PC-3 (cell line): ENCODE measurements at regions of chr3 and their contacts with region 1.

Region 1: GRCh38 chr3:153927107-153927506 is 194.1 kb upstream of the ARHGEF26 start:
- DNase-seq: peak; percentile 80
- ATAC-seq: peak; percentile 93
- H3K4me3 ChIP-seq: 0 out of 2 replicates have a peak overlapping the region, but pooled peaks have one; percentile 5
- H3K27ac ChIP-seq: no peak overlapping the region
- H3K4me1 ChIP-seq: peaks cover 6% of the 10 kb centered on the region
- H3K27me3 ChIP-seq: no peaks in the 10 kb centered on the region
- CTCF ChIP-seq: peak; percentile 65

Region 2: DNA sequence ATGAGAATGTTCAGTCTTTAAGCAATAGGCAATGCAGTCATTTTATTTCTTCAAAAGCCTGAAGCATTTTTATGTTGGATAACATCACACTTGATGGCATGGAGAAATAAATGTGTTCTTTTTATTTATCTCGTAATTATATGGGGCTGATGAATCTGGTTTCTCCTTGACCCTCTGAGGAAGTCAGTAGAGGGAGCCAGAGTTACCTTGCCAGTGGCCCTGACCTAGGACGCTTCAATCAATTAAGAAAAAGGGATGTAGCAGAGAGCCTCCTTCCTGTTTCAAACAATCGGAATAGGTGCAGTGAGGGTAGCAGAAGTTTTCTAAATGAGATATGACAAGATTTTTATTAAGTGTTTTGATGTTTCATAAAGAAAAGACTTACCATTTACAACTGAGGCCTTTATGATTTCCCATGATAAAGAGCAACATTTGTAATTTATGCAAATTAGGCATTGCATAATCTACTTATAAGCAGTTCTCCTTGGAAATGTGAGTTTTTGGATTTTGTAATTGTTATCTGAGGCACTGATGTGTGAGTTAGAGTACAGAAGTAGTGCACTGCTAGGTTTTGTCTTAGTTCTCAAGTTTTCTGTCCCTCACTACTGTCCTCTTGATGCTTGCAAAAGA is 635.9 kb before region 1 on chr3:
- CTCF ChIA-PET with region 1: no interaction called
- POLR2A ChIA-PET with region 1: no interaction called
- intact Hi-C with region 1: loop called (anchors 2 kb)
- DNase-seq: peak; percentile 69
- ATAC-seq: peak; percentile 80
- H3K4me3 ChIP-seq: no peak overlapping the region
- H3K27ac ChIP-seq: no peak overlapping the region
- H3K4me1 ChIP-seq: peaks cover 33% of the 10 kb centered on the region
- H3K27me3 ChIP-seq: no peaks in the 10 kb centered on the region
- CTCF ChIP-seq: peak; percentile 85

Region 3: DNA sequence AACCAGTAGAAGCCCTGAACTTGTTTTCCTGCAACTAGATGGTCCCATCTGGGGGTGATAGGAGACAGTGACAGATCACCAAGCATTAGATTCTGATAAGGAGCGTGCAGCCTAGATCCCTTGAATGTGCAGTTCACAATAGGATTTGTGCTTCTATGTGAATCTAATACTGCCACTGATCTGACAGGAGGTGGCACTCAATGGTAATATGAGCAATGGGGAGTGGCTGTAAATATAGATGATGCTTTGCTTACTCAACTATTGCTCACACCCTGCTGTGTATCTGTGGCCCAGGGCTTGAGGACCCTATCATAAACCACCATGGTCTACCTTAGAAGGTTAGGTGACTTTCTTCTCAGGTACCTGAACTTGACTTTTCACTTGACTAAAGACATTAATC is 223.0 kb before region 1 on chr3:
- CTCF ChIA-PET with region 1: no interaction called
- POLR2A ChIA-PET with region 1: no interaction called
- intact Hi-C with region 1: loop called (anchors 2 kb)
- DNase-seq: peak; percentile 61
- ATAC-seq: peak; percentile 80
- H3K4me3 ChIP-seq: no peak overlapping the region
- H3K27ac ChIP-seq: no peak overlapping the region
- H3K4me1 ChIP-seq: peaks cover 12% of the 10 kb centered on the region
- H3K27me3 ChIP-seq: no peaks in the 10 kb centered on the region
- CTCF ChIP-seq: peak; percentile 51

Region 4: DNA sequence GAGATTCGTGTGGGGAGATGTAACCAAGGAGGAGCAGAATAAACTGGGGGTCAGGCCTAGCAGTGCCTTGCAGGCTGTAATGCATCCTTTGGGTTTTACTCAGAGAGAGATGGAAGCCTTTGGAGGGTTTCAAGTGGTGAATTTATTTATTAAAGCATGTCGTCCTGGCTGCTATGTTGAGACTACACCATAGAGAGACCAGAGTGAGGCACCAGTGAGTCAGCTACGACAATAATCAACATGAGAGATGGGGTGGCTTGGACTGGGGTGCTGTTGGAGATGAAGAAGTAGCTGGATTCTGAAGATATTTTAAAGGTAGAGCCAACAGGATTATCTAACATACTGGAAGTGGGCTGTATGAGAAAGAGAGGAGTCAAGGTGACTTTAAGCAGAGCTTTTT is 141.2 kb before region 1 on chr3:
- CTCF ChIA-PET with region 1: no interaction called
- POLR2A ChIA-PET with region 1: no interaction called
- intact Hi-C with region 1: loop called (anchors 2 kb)
- DNase-seq: peak; percentile 16
- ATAC-seq: peak; percentile 58; the same call in 1 of the 2 replicates
- H3K4me3 ChIP-seq: no peak overlapping the region
- H3K27ac ChIP-seq: no peak overlapping the region
- H3K4me1 ChIP-seq: no peaks in the 10 kb centered on the region
- H3K27me3 ChIP-seq: no peaks in the 10 kb centered on the region
- CTCF ChIP-seq: peak; percentile 55; the same call in 1 of the 2 replicates

Region 5: GRCh38 chr3:153958635-153959595 is 31.8 kb after region 1 on chr3:
- CTCF ChIA-PET with region 1: no interaction called
- POLR2A ChIA-PET with region 1: no interaction called
- intact Hi-C with region 1: no loop called
- DNase-seq: peak; percentile 14
- ATAC-seq: no peak
- H3K4me3 ChIP-seq: no peak overlapping the region
- H3K27ac ChIP-seq: no peak overlapping the region
- H3K4me1 ChIP-seq: peaks cover 14% of the 10 kb centered on the region; the same call in 1 of the 2 replicates
- H3K27me3 ChIP-seq: no peaks in the 10 kb centered on the region
- CTCF ChIP-seq: no peak

Region 6: GRCh38 chr3:153970741-153971347 is 43.7 kb after region 1 on chr3:
- CTCF ChIA-PET with region 1: no interaction called
- POLR2A ChIA-PET with region 1: no interaction called
- intact Hi-C with region 1: loop called (anchors 2 kb)
- DNase-seq: peak; percentile 62
- ATAC-seq: peak; percentile 72
- H3K4me3 ChIP-seq: no peak overlapping the region
- H3K27ac ChIP-seq: no peak overlapping the region
- H3K4me1 ChIP-seq: peaks cover 8% of the 10 kb centered on the region
- H3K27me3 ChIP-seq: no peaks in the 10 kb centered on the region
- CTCF ChIP-seq: peak; percentile 82

Region 7: DNA sequence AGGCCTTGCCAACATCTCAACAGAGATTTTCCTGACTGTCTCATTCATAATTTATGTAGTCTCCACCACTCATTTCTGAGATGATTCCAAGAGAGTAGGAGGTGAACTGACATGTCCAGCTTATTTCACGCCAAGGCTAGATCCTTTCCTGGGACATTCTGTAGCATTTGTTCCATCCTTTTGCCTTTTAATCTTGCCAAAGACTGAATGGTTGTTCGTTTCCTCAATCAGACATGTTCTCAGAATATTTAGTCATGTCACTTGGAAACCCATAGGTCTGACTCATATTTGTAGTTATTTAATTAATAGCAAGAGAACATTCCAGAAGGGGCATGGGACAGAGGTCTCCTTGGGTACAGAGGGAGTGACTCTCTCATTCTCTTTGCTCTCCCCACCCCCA is 316.2 kb after region 1 on chr3:
- CTCF ChIA-PET with region 1: no interaction called
- POLR2A ChIA-PET with region 1: no interaction called
- intact Hi-C with region 1: no loop called
- DNase-seq: peak; percentile 21
- ATAC-seq: peak; percentile 62
- H3K4me3 ChIP-seq: no peak overlapping the region
- H3K27ac ChIP-seq: peak overlapping the region; percentile 2; the same call in 1 of the 2 replicates
- H3K4me1 ChIP-seq: peaks cover 7% of the 10 kb centered on the region
- H3K27me3 ChIP-seq: no peaks in the 10 kb centered on the region
- CTCF ChIP-seq: no peak